Heart right ventricle (tissue), 16 donors: ENCODE measurements at regions of chr3 and their contacts with region 1.

Region 1: GRCh38 chr3:190120269-190121060 is at the start of gene P3H2:
- DNase-seq: peak; percentile 76 to 80
- ATAC-seq: peak; percentile 98 to 100 (median 99)
- H3K4me3 ChIP-seq: peak within 1 kb of the TSS; percentile 36 to 89 (median 70)
- H3K27ac ChIP-seq: peak within 1 kb of the TSS in 7 of 10 donors; percentile 52 to 77 (median 72)
- H3K4me1 ChIP-seq: peaks cover 2 to 17% (median 7%) of the 10 kb centered on the region in 9 donors
- H3K27me3 ChIP-seq: peaks cover 0 to 57% (median 8%) of the 10 kb centered on the region in 7 donors
- CTCF ChIP-seq: peak in 8 of 9 donors; percentile 17 to 72 (median 56)
- total RNA-seq, gene P3H2: 0.49 to 28.8 (median 4.4) TPM

Region 2: DNA sequence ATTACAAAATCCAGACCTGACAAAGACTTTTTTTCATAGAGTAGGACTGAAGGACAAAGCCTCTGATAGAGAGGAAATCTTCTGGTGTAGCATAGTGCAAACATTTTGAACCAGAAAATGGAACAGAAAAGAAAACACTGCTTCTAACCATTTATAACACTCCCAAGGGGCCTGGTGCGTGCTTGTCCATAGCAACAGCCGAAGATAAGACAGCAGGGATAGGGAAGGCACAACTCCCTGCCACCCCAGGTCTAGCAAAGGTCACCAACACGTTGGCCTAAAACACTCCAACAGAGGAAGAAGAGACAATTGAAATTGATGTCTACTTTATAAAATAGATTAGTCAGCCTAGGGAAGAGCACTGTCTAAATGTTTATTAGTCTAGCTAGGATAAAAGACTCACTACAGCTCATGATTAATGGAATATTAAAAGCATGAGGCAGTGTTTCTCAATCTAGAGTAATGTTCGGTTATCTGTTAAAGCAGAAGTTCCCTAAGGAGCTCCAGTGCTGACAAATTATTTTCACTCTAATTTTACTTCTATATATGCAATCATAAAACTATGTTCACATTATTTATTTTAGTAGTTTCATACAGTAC is 145.0 kb before region 1 on chr3:
- intact Hi-C with region 1: loop called in 4 of 10 experiments (anchors 5 to 10 kb)
- DNase-seq: no peak
- ATAC-seq: peak in 2 of 8 donors; percentile 19 to 34
- H3K4me3 ChIP-seq: no peak overlapping the region
- H3K27ac ChIP-seq: no peak overlapping the region
- H3K4me1 ChIP-seq: peaks cover 0 to 13% (median 0%) of the 10 kb centered on the region in 9 donors
- H3K27me3 ChIP-seq: no peaks in the 10 kb centered on the region
- CTCF ChIP-seq: no peak

Region 3: GRCh38 chr3:190003681-190004123 is 116.8 kb before region 1 on chr3:
- intact Hi-C with region 1: loop called in 1 of 10 experiments (anchors 10 kb)
- DNase-seq: no peak
- ATAC-seq: peak; percentile 38 to 91 (median 66)
- H3K4me3 ChIP-seq: no peak overlapping the region
- H3K27ac ChIP-seq: peak overlapping the region in 2 of 10 donors; percentile 24 to 34
- H3K4me1 ChIP-seq: peaks cover 0 to 23% (median 5%) of the 10 kb centered on the region in 9 donors
- H3K27me3 ChIP-seq: no peaks in the 10 kb centered on the region
- CTCF ChIP-seq: no peak

Region 4: GRCh38 chr3:190064112-190064511 is 56.4 kb before region 1 on chr3:
- intact Hi-C with region 1: no loop called
- DNase-seq: no peak
- ATAC-seq: peak in 2 of 8 donors; percentile 16 to 56
- H3K4me3 ChIP-seq: no peak overlapping the region
- H3K27ac ChIP-seq: no peak overlapping the region
- H3K4me1 ChIP-seq: peaks cover 0 to 6% (median 0%) of the 10 kb centered on the region in 9 donors
- H3K27me3 ChIP-seq: no peaks in the 10 kb centered on the region
- CTCF ChIP-seq: no peak